PC-9 (cell line): ENCODE measurements at regions of chr3 and their contacts with region 1.

Region 1: GRCh38 chr3:11140054-11140712 is 14.1 kb upstream of the HRH1 start:
- DNase-seq: peak; percentile 77 to 79
- H3K4me3 ChIP-seq: peak overlapping the region; percentile 28; the same call in 1 of the 2 replicates
- H3K27ac ChIP-seq: peak overlapping the region; percentile 68
- H3K4me1 ChIP-seq: peaks cover 52% of the 10 kb centered on the region
- H3K27me3 ChIP-seq: no peaks in the 10 kb centered on the region
- CTCF ChIP-seq: no peak

Region 2: GRCh38 chr3:10115326-10116137 is 1024.7 kb before region 1 on chr3 and contains the start of gene BRK1:
- CTCF ChIA-PET with region 1: no interaction called
- POLR2A ChIA-PET with region 1: interaction called, 15 read pairs
- intact Hi-C with region 1: no loop called
- DNase-seq: peak; percentile 76 to 84
- H3K4me3 ChIP-seq: peak within 1 kb of the TSS; percentile 75
- H3K27ac ChIP-seq: peak within 1 kb of the TSS; percentile 41; the same call in 1 of the 2 replicates
- H3K4me1 ChIP-seq: peaks cover 8% of the 10 kb centered on the region
- H3K27me3 ChIP-seq: no peaks in the 10 kb centered on the region
- CTCF ChIP-seq: no peak
- total RNA-seq, gene BRK1: 73.8 and 109 TPM in 2 replicates

Region 3: GRCh38 chr3:10907262-10907661 is 232.9 kb before region 1 on chr3:
- CTCF ChIA-PET with region 1: no interaction called
- POLR2A ChIA-PET with region 1: no interaction called
- intact Hi-C with region 1: no loop called
- DNase-seq: no peak
- H3K4me3 ChIP-seq: no peak overlapping the region
- H3K27ac ChIP-seq: no peak overlapping the region
- H3K4me1 ChIP-seq: no peaks in the 10 kb centered on the region
- H3K27me3 ChIP-seq: peaks cover 44% of the 10 kb centered on the region
- CTCF ChIP-seq: no peak

Region 4: DNA sequence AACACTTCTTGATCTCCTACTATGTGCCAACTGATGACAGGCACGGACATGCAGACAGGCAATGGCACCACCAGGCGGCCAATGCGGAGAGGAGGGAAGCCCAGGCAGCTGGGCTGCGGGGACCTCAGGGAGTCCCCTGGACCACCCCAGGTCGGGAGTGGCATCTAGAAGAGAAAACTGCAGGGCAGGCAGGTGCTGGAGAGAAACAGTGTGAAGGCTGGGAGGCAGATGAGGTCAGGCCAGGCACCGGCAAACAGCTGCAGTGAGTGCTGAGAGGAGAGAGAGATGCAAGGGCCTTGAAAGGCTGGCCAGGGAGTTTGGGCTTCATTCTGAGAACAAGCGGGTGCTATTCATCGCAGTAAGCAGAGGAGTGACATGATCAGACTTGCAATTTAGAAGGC is 118.6 kb before region 1 on chr3:
- CTCF ChIA-PET with region 1: no interaction called
- POLR2A ChIA-PET with region 1: no interaction called
- intact Hi-C with region 1: no loop called
- DNase-seq: no peak
- H3K4me3 ChIP-seq: no peak overlapping the region
- H3K27ac ChIP-seq: no peak overlapping the region
- H3K4me1 ChIP-seq: no peaks in the 10 kb centered on the region
- H3K27me3 ChIP-seq: peaks cover 100% of the 10 kb centered on the region
- CTCF ChIP-seq: no peak

Region 5: DNA sequence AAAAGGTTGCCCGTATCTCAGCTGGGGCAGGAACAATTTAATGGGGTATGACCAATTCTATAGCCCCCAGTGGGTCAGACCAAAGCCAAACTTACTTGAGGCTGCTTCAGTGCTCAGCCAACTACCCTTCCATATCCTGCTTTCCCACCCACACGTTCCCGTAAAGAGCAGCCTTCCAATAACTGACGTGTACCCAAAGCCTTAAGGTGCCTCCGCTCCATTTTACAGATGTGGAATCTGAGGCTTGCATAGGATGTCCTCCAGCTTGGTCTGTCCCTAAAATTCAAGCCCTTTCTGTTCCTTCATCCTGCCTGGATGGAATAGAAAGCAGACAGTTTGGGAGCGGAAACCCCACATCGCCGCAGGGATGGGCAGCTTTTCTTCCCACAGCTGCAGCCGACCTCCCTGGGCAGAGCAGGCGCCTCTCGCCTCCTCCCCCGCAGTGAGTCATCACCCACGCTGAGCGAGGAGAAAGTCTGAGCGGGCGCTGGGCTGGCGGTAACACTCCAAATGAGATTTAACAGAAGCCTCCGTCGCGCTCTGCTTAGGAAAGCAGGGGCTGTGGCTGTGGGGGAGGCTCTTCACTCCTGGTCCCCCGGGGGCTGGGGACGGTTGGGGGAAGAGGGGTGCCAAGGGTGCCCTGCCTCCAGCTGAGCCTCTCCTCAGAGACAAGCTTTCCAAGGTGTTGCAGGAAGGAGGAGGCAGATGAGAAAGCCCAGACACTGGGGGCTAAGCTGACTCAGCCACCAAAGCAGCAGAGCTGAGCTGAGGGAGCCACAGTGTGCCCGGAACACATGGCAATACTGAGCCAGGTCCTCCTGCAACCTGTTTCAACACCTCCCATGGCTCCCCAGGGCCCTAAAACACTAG is 43.7 kb before region 1 on chr3:
- CTCF ChIA-PET with region 1: no interaction called
- POLR2A ChIA-PET with region 1: interaction called, 20 read pairs
- intact Hi-C with region 1: loop called (anchors 2 kb)
- DNase-seq: peak; percentile 55 to 75
- H3K4me3 ChIP-seq: peak overlapping the region; percentile 53
- H3K27ac ChIP-seq: peak overlapping the region; percentile 54; the same call in 1 of the 2 replicates
- H3K4me1 ChIP-seq: peaks cover 13% of the 10 kb centered on the region
- H3K27me3 ChIP-seq: no peaks in the 10 kb centered on the region
- CTCF ChIP-seq: no peak

Region 6: DNA sequence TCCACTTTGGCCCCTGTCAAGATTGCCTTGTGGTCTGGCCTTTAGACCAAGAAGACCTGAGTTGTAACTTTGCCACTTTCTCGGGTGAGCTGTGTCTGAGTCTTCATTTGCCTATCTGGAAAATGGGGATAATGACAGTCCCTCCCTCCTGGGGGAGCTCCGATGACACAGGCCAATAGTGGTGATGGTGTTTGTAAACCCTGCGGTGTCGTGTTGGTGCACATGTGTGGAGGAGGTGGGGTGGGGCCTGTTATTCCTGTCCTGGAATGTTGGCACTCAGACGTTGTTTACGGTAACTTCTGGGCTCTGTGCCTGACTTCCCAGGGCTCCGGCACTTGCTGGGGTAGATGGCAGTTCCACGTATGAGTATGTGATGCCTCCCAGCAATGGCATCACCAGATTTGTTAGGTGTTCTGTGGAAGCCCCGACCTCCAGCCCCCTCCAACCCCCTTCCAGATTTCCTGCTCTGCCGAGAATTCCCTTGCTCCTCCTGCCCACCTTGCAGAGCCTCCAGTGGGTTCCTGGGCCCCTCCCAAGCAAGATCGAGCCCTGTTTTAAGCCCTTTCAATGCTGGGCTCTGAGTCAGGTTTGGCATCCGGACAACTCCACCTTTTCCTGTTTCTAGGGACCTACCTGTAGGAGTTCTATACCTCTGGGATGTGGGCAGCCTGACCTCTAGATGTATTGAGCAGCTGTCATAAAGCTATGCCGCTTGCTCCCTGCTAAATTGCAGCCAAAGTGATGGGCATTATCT is 45.6 kb after region 1 on chr3:
- CTCF ChIA-PET with region 1: interaction called, 4 read pairs
- POLR2A ChIA-PET with region 1: no interaction called
- intact Hi-C with region 1: loop called (anchors 2 kb)
- DNase-seq: peak; percentile 84 to 90
- H3K4me3 ChIP-seq: peak overlapping the region; percentile 12; the same call in 1 of the 2 replicates
- H3K27ac ChIP-seq: peak overlapping the region; percentile 49
- H3K4me1 ChIP-seq: peaks cover 45% of the 10 kb centered on the region
- H3K27me3 ChIP-seq: no peaks in the 10 kb centered on the region
- CTCF ChIP-seq: no peak; the same call in 1 of the 2 replicates

Region 7: DNA sequence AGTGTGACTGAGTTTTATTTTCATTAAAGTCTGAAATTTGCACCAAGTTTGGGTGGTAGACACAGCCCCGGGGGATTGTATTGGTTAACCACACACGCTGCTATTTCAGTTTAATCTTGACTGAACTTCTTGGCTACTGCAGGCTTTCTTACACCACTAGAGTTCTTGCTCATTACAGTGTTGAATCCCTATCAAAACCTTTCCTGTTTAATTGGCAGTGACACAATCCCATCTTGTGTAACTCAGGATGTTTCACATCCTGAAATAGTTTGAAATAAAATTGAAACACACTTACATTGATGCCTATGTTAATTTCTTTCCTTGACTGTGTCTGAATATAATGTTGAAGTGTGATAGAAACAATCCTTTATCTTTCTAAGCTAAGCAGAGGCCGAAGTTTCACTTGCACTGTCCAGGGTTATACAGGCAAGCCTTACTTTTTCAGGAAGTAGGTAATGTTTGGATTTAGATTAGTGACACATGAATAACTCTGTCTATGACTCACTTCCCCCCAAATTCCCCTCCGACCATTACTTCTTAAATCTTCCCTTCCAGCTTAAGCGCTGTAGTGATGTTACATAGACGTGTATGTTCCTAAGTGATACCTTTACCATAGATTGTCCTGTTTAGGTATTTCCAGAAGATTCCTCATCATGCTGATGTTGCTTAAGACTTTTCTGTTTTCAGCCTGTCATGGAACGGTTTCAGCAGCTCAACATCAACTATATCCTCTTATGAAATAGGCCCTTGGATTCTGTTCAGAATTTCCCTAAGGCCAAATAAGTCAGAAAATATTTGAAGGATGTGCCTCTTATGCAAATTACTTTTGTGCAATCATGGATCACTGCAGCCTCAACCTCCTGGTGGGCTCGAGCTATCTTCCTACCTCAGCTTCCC is 148.9 kb after region 1 on chr3:
- CTCF ChIA-PET with region 1: no interaction called
- POLR2A ChIA-PET with region 1: no interaction called
- intact Hi-C with region 1: loop called (anchors 2 kb)
- DNase-seq: peak; percentile 35 to 92
- H3K4me3 ChIP-seq: peak overlapping the region; percentile 42; the same call in 1 of the 2 replicates
- H3K27ac ChIP-seq: peak overlapping the region; percentile 99
- H3K4me1 ChIP-seq: peaks cover 78% of the 10 kb centered on the region
- H3K27me3 ChIP-seq: no peaks in the 10 kb centered on the region
- CTCF ChIP-seq: no peak; the same call in 1 of the 2 replicates